ENCODE measurements at regions of chr4 and their contacts with region 1.

Region 1: DNA sequence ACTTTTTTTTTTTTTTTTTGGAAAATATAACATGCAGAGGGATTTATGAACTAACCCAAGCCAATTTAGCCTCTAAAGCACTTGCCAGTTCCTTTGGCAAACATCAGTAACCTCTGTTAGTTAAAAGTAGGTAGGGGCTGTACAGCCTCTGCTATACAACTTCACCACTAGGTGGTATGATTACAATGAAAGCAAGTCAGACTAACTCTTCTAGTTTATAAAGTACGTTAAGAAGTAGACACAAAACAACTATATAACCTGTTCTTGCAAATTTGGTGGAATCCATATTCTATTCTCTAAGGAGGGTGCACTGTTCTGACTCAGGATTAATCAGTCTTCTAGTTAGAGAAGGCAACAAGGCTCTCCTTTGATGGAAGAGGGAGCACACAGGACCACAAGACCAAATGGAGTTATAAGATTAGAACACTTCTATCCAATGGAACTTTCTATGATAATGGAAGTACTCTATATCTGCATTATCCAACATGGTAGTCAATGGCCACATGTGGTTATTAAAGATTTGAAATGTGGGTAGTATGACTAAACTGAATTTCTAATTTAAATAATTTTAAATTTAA is 12.8 kb downstream of the AIMP1 start:
- DNase-seq: no peak
- H3K4me3 Mint-ChIP-seq: no peak overlapping the region
- H3K27ac Mint-ChIP-seq: no peak overlapping the region
- H3K4me1 Mint-ChIP-seq: peaks cover 10% of the 10 kb centered on the region
- H3K27me3 Mint-ChIP-seq: no peaks in the 10 kb centered on the region

Region 2: DNA sequence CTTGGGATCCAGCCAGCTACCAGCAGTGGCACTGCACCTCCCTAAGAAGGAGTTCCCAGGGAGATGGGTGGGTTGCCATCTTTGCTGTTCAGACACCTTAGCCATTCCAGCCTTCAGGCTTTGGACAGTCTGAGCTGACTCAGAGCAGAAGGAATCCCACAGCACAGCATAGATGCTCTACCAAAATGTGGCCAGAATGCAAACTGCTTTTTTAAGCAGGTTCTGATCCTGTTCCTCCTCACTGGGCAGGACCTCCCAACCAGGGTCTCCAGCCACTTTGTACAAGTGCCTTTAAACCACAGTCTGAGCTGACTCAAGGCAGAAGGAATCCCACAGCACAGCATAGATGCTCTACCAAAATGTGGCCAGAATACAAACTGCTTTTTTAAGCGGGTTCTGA is 224.9 kb before region 1 on chr4:
- CTCF ChIA-PET with region 1: no interaction called
- POLR2A ChIA-PET with region 1: no interaction called
- DNase-seq: no peak
- H3K4me3 Mint-ChIP-seq: no peak overlapping the region
- H3K27ac Mint-ChIP-seq: no peak overlapping the region
- H3K4me1 Mint-ChIP-seq: no peaks in the 10 kb centered on the region
- H3K27me3 Mint-ChIP-seq: no peaks in the 10 kb centered on the region

Region 3: DNA sequence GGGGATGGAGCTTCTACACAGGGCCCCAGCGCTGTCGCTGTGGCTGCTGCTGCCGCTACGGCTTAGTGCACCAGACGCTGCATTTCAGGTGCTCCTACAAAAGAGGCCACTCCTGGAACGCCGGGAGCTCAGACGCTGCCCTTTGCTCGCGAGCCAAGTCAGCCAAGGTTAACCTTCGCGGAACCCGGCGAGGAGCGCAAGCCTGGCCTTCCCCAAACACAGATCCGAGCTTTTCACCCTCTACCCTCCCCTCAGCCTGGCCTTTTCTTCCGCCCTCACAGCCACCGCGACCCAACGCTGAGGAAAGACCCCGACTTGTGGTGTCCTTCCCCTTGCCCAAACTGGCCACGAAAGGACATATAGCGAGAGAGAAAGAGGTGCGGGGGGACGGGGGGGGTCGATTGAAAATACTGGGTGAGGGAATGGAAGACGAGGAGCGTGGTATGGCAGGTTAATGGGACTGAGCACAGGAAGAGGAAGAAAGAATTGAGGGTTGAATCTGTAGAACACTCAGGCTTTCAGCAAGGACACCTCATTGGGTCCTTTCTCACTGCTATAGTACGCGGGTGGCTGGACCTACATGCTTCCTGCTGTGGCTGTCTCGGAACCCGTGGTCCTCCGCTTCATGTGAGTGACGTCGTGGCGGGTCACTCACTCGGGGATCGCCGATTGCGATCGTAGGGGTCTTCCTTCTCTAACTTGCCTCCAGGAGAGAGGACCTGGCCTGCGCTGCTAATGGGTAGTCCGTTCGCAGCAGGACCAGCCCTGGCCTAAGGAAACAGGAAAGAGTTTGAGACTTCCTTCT is 13.0 kb before region 1 on chr4 and contains the starts of genes AIMP1 and TBCK:
- CTCF ChIA-PET with region 1: interaction called, 9 read pairs
- POLR2A ChIA-PET with region 1: interaction called, 18 read pairs
- DNase-seq: peak; percentile 89
- H3K4me3 Mint-ChIP-seq: no peak within 1 kb of the TSS
- H3K27ac Mint-ChIP-seq: no peak within 1 kb of the TSS
- H3K4me1 Mint-ChIP-seq: peaks cover 33% of the 10 kb centered on the region
- H3K27me3 Mint-ChIP-seq: no peaks in the 10 kb centered on the region
- total RNA-seq, gene AIMP1: 49.5 to 52.4 TPM
- total RNA-seq, gene TBCK: 25.4 to 26.8 TPM

Region 4: GRCh38 chr4:106495476-106495875 is 166.3 kb after region 1 on chr4:
- CTCF ChIA-PET with region 1: no interaction called
- POLR2A ChIA-PET with region 1: no interaction called
- DNase-seq: no peak
- H3K4me3 Mint-ChIP-seq: no peak overlapping the region
- H3K27ac Mint-ChIP-seq: no peak overlapping the region
- H3K4me1 Mint-ChIP-seq: no peaks in the 10 kb centered on the region
- H3K27me3 Mint-ChIP-seq: no peaks in the 10 kb centered on the region